CD8-positive, alpha-beta T cell (primary cell): ENCODE measurements at regions of chr11 and their contacts with region 1.

Region 1: DNA sequence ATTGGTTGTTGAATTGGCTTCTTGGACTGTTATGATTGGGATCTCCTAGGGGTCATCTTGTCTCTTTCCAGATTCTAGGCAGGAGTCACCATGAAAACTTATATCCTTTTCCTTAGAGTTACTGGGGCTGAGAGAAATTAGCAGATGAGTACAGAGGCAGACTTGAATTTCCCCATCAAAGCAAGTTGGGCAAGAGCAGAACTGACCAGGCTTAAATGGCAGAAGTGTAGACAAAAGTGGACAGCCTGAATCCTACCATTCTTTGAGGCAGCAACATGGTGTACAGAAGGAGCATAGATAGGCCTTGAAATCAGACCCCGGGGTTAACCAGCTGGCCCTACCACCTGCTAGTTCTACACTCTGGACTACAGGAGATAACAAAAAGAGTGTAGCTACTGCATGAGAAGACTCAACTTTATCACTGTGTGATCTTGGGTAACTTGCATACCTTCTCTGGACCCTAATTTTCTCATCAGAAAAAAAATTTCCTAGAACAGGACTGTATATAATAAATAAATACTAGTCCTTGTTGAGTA is 427.4 kb upstream of the CADM1 start:
- DNase-seq: no peak
- ATAC-seq: no peak
- H3K4me3 ChIP-seq: no peak overlapping the region
- H3K4me3 Mint-ChIP-seq: no peak overlapping the region
- H3K27ac ChIP-seq: no peak overlapping the region
- H3K27ac Mint-ChIP-seq: no peak overlapping the region
- H3K4me1 ChIP-seq: no peaks in the 10 kb centered on the region
- H3K4me1 Mint-ChIP-seq: no peaks in the 10 kb centered on the region
- H3K27me3 ChIP-seq: no peaks in the 10 kb centered on the region
- H3K27me3 Mint-ChIP-seq: no peaks in the 10 kb centered on the region
- CTCF ChIP-seq: no peak

Region 2: DNA sequence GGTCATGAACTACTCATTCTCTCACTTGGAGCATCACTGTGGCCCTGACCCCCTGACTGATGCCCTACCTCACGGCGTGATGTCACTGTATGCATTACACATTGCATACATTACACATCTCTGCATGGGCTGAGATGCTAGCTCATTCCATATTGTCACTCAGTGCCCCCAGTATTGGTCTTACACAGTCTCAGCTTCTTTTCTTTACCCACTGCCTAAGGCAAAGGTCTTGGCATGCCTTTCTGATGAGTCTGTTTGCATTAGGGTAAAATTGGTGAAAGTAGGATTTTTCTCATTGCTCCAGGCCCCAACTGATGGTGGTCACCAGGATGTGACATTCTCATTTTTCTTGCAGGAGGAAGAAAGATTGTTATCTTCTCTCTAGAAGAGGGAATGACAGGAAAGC is 37.9 kb before region 1 on chr11:
- CTCF ChIA-PET with region 1: no interaction called
- POLR2A ChIA-PET with region 1: no interaction called
- intact Hi-C with region 1: loop called in 1 of 2 experiments (anchors 1 kb)
- DNase-seq: no peak
- ATAC-seq: no peak
- H3K4me3 ChIP-seq: no peak overlapping the region
- H3K4me3 Mint-ChIP-seq: no peak overlapping the region
- H3K27ac ChIP-seq: no peak overlapping the region
- H3K27ac Mint-ChIP-seq: no peak overlapping the region
- H3K4me1 ChIP-seq: no peaks in the 10 kb centered on the region
- H3K4me1 Mint-ChIP-seq: no peaks in the 10 kb centered on the region
- H3K27me3 ChIP-seq: no peaks in the 10 kb centered on the region
- H3K27me3 Mint-ChIP-seq: no peaks in the 10 kb centered on the region
- CTCF ChIP-seq: no peak

Region 3: GRCh38 chr11:116499396-116500003 is 567.9 kb after region 1 on chr11:
- CTCF ChIA-PET with region 1: no interaction called
- POLR2A ChIA-PET with region 1: no interaction called
- intact Hi-C with region 1: no loop called
- DNase-seq: peak in 4 of 9 experiments; percentile 7 to 22 (median 10)
- ATAC-seq: no peak
- H3K4me3 ChIP-seq: no peak overlapping the region
- H3K4me3 Mint-ChIP-seq: no peak overlapping the region
- H3K27ac ChIP-seq: no peak overlapping the region
- H3K27ac Mint-ChIP-seq: no peak overlapping the region
- H3K4me1 ChIP-seq: no peaks in the 10 kb centered on the region
- H3K4me1 Mint-ChIP-seq: no peaks in the 10 kb centered on the region
- H3K27me3 ChIP-seq: peaks cover 0 to 12% of the 10 kb centered on the region in 2 experiments
- H3K27me3 Mint-ChIP-seq: peaks cover 39% of the 10 kb centered on the region
- CTCF ChIP-seq: no peak